ENCODE measurements at regions of chr15 and their contacts with region 1.

Region 1: GRCh38 chr15:84658080-84658787 is at the start of gene NMB:
- DNase-seq: peak; percentile 50 to 90
- H3K4me3 ChIP-seq: peak within 1 kb of the TSS; percentile 69 to 75
- H3K27ac ChIP-seq: peak within 1 kb of the TSS; percentile 86 to 91
- H3K4me1 ChIP-seq: peaks cover 2 to 24% of the 10 kb centered on the region in 2 donors
- H3K27me3 ChIP-seq: no peaks in the 10 kb centered on the region
- CTCF ChIP-seq: peak; percentile 76 to 83 (median 81)
- total RNA-seq, gene NMB: 18.8 TPM

Region 2: DNA sequence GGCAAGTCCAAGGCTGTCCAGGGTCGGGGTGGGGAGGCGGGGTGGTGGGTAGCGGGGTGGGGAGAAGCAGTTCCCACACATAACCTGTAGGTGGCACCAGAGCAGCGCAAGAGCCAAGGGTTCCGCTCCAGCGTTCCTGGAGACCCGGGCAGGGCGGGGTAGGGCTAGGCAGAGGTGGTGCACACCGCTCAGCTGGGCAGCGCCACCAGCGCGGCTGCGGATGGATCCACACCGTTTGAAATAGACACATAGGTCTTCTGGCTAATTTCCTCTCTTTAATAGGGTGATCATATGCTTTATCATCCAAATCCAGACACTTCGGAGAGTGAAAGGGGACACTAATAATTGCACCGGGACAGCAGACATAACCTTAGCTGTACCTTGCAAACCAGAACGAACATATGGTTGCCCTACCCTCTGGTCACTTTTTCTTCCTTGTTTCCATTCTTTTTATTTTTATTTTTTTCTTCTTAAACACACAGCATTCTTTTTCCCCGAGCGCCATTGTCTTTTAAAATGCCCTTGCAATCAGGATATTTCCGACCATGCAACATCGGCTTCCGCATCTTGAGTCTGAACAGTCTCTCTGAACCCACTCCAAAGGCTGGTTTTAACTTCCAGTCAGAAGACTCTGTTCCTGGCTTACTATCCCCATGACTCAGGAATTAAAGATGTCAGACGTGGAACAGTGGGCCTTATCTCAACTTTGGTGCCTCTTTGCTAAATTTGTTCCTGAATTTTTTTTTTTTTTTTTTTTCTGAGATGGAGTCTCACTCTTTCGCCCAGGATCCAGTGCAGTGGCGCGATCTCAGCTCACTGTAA is 70.0 kb before region 1 on chr15:
- intact Hi-C with region 1: loop called (anchors 1 kb)
- DNase-seq: peak; percentile 36 to 92
- H3K4me3 ChIP-seq: peak overlapping the region; percentile 45 to 56
- H3K27ac ChIP-seq: no peak overlapping the region
- H3K4me1 ChIP-seq: no peaks in the 10 kb centered on the region
- H3K27me3 ChIP-seq: no peaks in the 10 kb centered on the region
- CTCF ChIP-seq: peak; percentile 65 to 96 (median 96)

Region 3: DNA sequence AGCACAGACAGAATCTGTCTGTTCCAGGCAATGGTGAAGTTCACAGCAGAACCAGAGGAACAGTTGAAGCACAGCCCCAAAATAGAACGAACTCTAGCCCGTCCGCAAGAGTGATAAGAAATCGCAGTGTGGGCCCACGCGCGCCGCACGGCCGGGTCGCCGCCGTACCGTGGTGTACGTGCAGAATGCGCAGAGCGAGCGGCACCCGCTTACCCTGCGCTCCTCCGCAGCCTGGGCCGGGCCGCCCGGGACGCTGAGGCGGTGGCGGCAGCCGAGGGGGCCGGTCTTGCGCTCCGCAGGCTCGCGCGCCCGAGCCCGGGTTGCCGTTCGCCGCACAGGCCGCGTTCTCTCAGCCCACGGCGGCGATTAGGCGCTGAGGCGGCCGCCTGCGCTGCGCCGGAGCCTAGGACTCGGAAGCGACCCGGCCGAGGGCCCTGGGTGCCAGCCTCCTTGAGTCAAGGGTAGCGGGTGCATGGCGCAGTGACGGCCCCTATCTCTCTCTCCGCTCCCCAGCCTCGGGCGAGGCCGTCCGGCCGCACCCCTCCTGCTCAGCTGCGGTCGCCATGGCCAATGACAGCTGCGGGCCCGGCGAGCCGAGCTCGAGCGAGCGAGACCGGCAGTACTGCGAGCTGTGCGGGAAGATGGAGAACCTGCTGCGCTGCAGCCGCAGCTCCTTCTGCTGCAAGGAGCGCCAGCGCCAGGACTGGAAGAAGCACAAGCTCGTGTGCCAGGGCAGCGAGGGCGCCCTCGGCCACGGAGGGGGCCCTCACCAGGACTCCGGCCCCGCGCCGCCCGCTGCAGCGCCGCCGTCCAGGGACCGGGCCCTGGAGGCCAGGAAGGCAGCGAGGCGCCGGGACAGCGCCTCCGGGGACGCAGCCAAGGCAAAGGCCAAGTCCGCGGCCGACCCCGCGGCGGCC is 24.7 kb before region 1 on chr15:
- intact Hi-C with region 1: loop called (anchors 1 kb)
- DNase-seq: peak in 1 of 2 donors; percentile 86
- H3K4me3 ChIP-seq: peak overlapping the region; percentile 79 to 94
- H3K27ac ChIP-seq: peak overlapping the region; percentile 93 to 97
- H3K4me1 ChIP-seq: peaks cover 12 to 39% of the 10 kb centered on the region in 2 donors
- H3K27me3 ChIP-seq: no peaks in the 10 kb centered on the region
- CTCF ChIP-seq: peak in 1 of 3 experiments; percentile 9

Region 4: DNA sequence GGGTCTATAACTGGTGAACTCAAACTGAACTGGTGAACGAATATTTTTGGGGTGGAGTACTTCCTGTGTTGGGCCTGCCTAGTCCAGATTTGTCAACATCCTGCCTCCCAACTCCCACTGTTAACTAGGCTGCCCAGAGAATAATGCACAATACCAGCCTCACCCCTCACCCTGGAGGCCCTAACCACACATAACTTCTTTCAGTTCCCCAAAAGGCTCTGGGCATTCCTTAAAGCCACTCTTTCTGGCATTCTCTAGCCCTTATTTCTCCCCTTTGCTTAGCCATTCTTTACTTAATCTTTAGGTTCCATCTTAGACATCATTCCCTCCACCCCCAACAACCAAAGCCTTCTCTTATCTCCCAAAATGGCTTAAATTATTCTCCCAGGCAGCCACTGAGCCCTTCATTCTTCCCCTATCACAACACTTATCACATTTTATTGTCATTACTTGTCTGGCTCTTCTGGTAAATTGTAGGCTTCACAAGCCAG is 66.8 kb after region 1 on chr15:
- intact Hi-C with region 1: no loop called
- DNase-seq: no peak
- H3K4me3 ChIP-seq: no peak overlapping the region
- H3K27ac ChIP-seq: peak overlapping the region in 1 of 2 donors; percentile 48
- H3K4me1 ChIP-seq: no peaks in the 10 kb centered on the region
- H3K27me3 ChIP-seq: no peaks in the 10 kb centered on the region
- CTCF ChIP-seq: no peak

Region 5: GRCh38 chr15:84748274-84749110 is 90.3 kb after region 1 on chr15 and contains the start of gene ZNF592:
- intact Hi-C with region 1: loop called (anchors 2 kb)
- DNase-seq: peak; percentile 24 to 92
- H3K4me3 ChIP-seq: peak within 1 kb of the TSS; percentile 82 to 94
- H3K27ac ChIP-seq: peak within 1 kb of the TSS; percentile 99
- H3K4me1 ChIP-seq: peaks cover 7 to 42% of the 10 kb centered on the region in 2 donors
- H3K27me3 ChIP-seq: no peaks in the 10 kb centered on the region
- CTCF ChIP-seq: peak in 1 of 3 experiments; percentile 89
- total RNA-seq, gene ZNF592: 36.1 TPM

Region 6: GRCh38 chr15:84785053-84785452 is 126.8 kb after region 1 on chr15:
- intact Hi-C with region 1: no loop called
- DNase-seq: no peak
- H3K4me3 ChIP-seq: no peak overlapping the region
- H3K27ac ChIP-seq: no peak overlapping the region
- H3K4me1 ChIP-seq: peaks cover 4 to 22% of the 10 kb centered on the region in 2 donors
- H3K27me3 ChIP-seq: no peaks in the 10 kb centered on the region
- CTCF ChIP-seq: no peak

Region 7: GRCh38 chr15:84924074-84924731 is 266.0 kb after region 1 on chr15:
- intact Hi-C with region 1: loop called (anchors 2 kb)
- DNase-seq: no peak
- H3K4me3 ChIP-seq: no peak overlapping the region
- H3K27ac ChIP-seq: peak overlapping the region; percentile 46 to 69
- H3K4me1 ChIP-seq: peaks cover 3 to 21% of the 10 kb centered on the region in 2 donors
- H3K27me3 ChIP-seq: no peaks in the 10 kb centered on the region
- CTCF ChIP-seq: no peak